ENCODE measurements at regions of chr6 and their contacts with region 1.

Region 1: GRCh38 chr6:692855-693722 is at the start of gene EXOC2:
- DNase-seq: peak; percentile 70 to 88 (median 81)
- ATAC-seq: peak; percentile 93
- H3K4me3 ChIP-seq: peak within 1 kb of the TSS; percentile 87
- H3K4me3 Mint-ChIP-seq: peak within 1 kb of the TSS; percentile 92 to 96 (median 95)
- H3K27ac ChIP-seq: peak within 1 kb of the TSS; percentile 83
- H3K27ac Mint-ChIP-seq: peak within 1 kb of the TSS; percentile 84 to 92 (median 91)
- H3K4me1 ChIP-seq: peaks cover 14 to 20% of the 10 kb centered on the region in 2 donors
- H3K4me1 Mint-ChIP-seq: peaks cover 23 to 45% (median 29%) of the 10 kb centered on the region in 7 donors
- H3K27me3 ChIP-seq: no peaks in the 10 kb centered on the region
- H3K27me3 Mint-ChIP-seq: no peaks in the 10 kb centered on the region
- total RNA-seq, gene EXOC2: 26.7 to 40.6 (median 38.8) TPM

Region 2: DNA sequence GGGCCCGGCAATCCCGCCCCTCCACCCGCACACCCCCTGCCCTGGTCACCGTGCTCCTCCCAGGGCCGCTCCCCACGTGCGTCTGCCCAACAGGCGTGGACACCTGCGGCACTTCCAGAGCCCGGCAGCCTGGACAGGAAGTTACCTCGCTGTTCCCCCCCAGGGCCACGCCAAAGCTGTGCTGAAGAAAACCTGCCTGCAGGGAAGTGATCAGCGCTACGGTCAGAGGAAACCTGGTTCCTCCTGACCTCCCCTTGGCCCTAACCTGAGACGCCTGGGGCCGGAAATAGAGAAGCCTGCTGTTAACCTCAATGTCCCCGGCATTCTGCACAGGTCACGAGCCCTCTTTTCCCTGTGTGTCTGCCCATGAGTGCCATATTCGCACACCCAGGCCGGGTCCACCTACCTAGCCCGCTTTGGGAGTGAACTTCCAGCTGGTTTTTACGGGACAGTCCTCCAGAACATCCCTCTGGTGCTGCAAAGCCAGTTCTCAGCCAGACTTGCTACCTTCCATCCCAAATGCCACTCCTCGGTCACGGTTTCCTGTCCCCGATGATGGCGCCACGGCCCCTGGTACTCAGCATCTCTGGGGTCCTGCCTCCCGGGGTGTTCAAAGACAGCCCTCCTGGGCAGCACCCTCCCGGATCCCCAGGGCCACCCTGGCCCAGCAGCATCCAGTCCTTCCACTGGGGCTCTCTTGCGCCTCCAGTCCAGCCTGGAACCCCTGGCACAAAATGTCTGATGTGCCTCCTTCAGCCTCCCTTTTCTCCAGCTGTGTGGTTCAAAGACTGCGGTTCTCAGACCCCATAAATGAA is 313.5 kb before region 1 on chr6:
- CTCF ChIA-PET with region 1: no interaction called
- POLR2A ChIA-PET with region 1: no interaction called
- intact Hi-C with region 1: no loop called
- DNase-seq: no peak
- ATAC-seq: peak; percentile 25
- H3K4me3 ChIP-seq: no peak overlapping the region
- H3K4me3 Mint-ChIP-seq: peak overlapping the region in 1 of 10 donors; percentile 3
- H3K27ac ChIP-seq: no peak overlapping the region
- H3K27ac Mint-ChIP-seq: no peak overlapping the region
- H3K4me1 ChIP-seq: no peaks in the 10 kb centered on the region
- H3K4me1 Mint-ChIP-seq: peaks cover 5 to 20% (median 9%) of the 10 kb centered on the region in 7 donors
- H3K27me3 ChIP-seq: no peaks in the 10 kb centered on the region
- H3K27me3 Mint-ChIP-seq: peaks cover 11 to 57% (median 29%) of the 10 kb centered on the region in 5 donors

Region 3: GRCh38 chr6:642805-643204 is 50.3 kb before region 1 on chr6:
- CTCF ChIA-PET with region 1: no interaction called
- POLR2A ChIA-PET with region 1: no interaction called
- intact Hi-C with region 1: loop called in 1 of 2 experiments (anchors 5 kb)
- DNase-seq: no peak
- ATAC-seq: no peak
- H3K4me3 ChIP-seq: no peak overlapping the region
- H3K4me3 Mint-ChIP-seq: no peak overlapping the region
- H3K27ac ChIP-seq: no peak overlapping the region
- H3K27ac Mint-ChIP-seq: no peak overlapping the region
- H3K4me1 ChIP-seq: peaks cover 0 to 10% of the 10 kb centered on the region in 2 donors
- H3K4me1 Mint-ChIP-seq: peaks cover 9 to 63% (median 47%) of the 10 kb centered on the region in 7 donors
- H3K27me3 ChIP-seq: no peaks in the 10 kb centered on the region
- H3K27me3 Mint-ChIP-seq: no peaks in the 10 kb centered on the region

Measured in naive thymus-derived CD4-positive, alpha-beta T cell (primary cell).